Ovary (tissue), 10 donors: ENCODE measurements at regions of chr6 and their contacts with region 1.

Region 1: GRCh38 chr6:138817822-138818308 is 22.0 kb downstream of the ECT2L start:
- DNase-seq: no peak
- H3K4me3 ChIP-seq: no peak overlapping the region
- H3K27ac ChIP-seq: no peak overlapping the region
- H3K4me1 ChIP-seq: no peaks in the 10 kb centered on the region
- H3K27me3 ChIP-seq: no peaks in the 10 kb centered on the region
- CTCF ChIP-seq: no peak
- EP300 ChIP-seq: no peak
- POLR2A ChIP-seq: no peak

Region 2: DNA sequence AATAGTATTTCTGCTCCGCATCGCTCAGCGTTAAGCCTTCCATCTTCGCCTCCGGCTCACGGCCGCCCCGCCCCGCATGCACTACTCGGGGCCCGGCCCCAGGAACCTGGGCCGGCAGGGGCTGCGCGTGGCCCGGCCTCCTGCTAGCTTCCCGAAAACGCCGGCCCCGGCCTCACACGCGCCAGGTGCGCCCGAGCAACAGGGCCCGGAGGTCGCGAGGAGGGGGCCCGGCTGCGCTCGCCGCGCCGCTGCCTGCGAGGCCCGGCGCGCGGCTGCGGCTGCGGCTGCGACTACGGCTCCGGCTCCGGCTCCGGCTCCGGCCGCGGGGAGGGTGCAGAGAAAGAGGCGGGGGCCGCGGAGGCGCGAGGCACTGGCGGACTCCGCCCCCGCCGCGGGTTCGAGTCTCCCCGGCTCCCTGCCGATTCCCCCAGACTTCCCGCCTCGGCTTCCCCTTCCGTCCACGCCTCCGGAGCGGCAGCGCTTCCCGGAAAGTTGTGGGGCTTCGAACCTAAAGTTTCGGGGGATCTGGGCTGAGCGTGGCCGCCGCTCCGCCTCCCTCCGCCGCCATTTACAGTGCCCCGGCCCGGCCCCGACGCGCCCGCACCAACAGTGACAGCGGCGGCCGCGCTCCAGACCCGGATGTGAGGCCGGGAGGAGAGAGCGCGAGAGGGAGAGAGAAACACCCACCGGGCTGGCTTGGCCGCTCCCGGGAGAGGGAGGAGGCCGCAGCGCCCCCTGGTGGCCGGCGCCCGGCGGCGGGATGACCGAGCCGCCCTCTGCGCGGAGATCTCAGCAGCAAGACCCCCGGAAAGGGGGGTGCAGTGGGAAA is 170.0 kb after region 1 on chr6 and contains the start of gene REPS1:
- intact Hi-C with region 1: loop called in 3 of 4 experiments (anchors 5 to 10 kb)
- DNase-seq: peak; percentile 86 to 95 (median 92)
- H3K4me3 ChIP-seq: peak within 1 kb of the TSS; percentile 83
- H3K27ac ChIP-seq: peak within 1 kb of the TSS; percentile 37 to 63
- H3K4me1 ChIP-seq: peaks cover 6% of the 10 kb centered on the region
- H3K27me3 ChIP-seq: no peaks in the 10 kb centered on the region
- CTCF ChIP-seq: peak; percentile 89 to 100 (median 96)
- EP300 ChIP-seq: no peak
- POLR2A ChIP-seq: peak; percentile 39
- total RNA-seq, gene REPS1: 36.0 to 65.6 (median 44.5) TPM